Activated CD8-positive, alpha-beta T cell treated with anti-CD3 and anti-CD28 coated beads for 36 hours (primary cell): ENCODE measurements at regions of chrX and their contacts with region 1.

Region 1: GRCh38 chrX:133670383-133670782 is 255.1 kb upstream of the GPC4 start:
- DNase-seq: no peak
- ATAC-seq: no peak
- H3K4me3 Mint-ChIP-seq: no peak overlapping the region
- H3K27ac Mint-ChIP-seq: no peak overlapping the region
- H3K4me1 Mint-ChIP-seq: no peaks in the 10 kb centered on the region
- H3K27me3 Mint-ChIP-seq: no peaks in the 10 kb centered on the region
- CTCF ChIP-seq: peak; percentile 44

Region 2: DNA sequence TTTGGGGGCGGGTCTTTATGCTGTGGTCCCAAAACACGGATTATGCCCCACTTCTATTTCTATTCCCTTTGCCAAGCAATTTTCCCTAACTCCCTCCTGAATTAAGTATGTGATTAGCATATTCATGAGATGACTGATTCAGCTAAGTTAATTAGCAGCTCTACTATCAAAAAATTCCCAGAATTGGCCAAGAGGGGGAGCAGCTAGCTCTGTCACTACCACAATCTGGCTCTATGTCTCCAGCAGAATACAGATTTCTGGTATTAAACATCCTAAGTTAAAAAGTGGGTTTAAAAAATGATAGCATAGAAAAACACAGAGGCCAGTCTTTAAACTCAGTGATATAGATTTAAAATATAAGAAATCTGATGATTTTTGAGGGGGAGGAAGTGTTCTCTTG is 335.4 kb before region 1 on chrX:
- CTCF ChIA-PET with region 1: interaction called, 14 read pairs
- POLR2A ChIA-PET with region 1: no interaction called
- intact Hi-C with region 1: loop called (anchors 5 kb)
- DNase-seq: peak; percentile 11
- ATAC-seq: no peak
- H3K4me3 Mint-ChIP-seq: no peak overlapping the region
- H3K27ac Mint-ChIP-seq: no peak overlapping the region
- H3K4me1 Mint-ChIP-seq: no peaks in the 10 kb centered on the region
- H3K27me3 Mint-ChIP-seq: no peaks in the 10 kb centered on the region
- CTCF ChIP-seq: peak; percentile 46

Region 3: DNA sequence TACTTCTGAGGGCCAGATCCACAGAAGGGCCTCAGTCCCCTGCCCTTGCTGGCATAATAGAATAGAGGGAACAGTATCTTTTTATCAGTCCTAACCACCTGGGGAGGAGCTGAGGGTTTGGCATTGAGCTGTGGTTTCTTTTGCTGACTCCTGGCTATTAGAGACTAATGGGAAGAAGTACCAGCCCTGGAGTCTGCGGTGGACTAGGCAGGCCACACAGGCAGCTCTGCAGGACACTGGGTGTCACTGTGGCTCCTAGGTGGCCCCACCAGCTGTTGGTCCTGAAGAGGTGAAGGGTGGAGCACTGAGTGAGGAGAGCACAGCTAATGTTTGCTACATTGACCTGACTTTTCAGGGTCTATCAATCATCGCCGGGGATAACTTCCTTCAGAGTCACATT is 202.3 kb before region 1 on chrX:
- CTCF ChIA-PET with region 1: no interaction called
- POLR2A ChIA-PET with region 1: no interaction called
- intact Hi-C with region 1: no loop called
- DNase-seq: no peak
- ATAC-seq: no peak
- H3K4me3 Mint-ChIP-seq: no peak overlapping the region
- H3K27ac Mint-ChIP-seq: no peak overlapping the region
- H3K4me1 Mint-ChIP-seq: no peaks in the 10 kb centered on the region
- H3K27me3 Mint-ChIP-seq: peaks cover 5% of the 10 kb centered on the region
- CTCF ChIP-seq: no peak

Region 4: GRCh38 chrX:133709486-133709885 is 39.1 kb after region 1 on chrX:
- CTCF ChIA-PET with region 1: no interaction called
- POLR2A ChIA-PET with region 1: no interaction called
- intact Hi-C with region 1: no loop called
- DNase-seq: no peak
- ATAC-seq: no peak
- H3K4me3 Mint-ChIP-seq: no peak overlapping the region
- H3K27ac Mint-ChIP-seq: no peak overlapping the region
- H3K4me1 Mint-ChIP-seq: no peaks in the 10 kb centered on the region
- H3K27me3 Mint-ChIP-seq: no peaks in the 10 kb centered on the region
- CTCF ChIP-seq: no peak